ENCODE measurements at regions of chr2 and their contacts with region 1.

Region 1: GRCh38 chr2:8234757-8235374 is 447.0 kb upstream of the ID2 start:
- DNase-seq: peak; percentile 34 to 43
- ATAC-seq: peak; percentile 84 to 92
- H3K4me3 ChIP-seq: no peak overlapping the region
- H3K27ac ChIP-seq: peak overlapping the region in 3 of 4 donors; percentile 9 to 76 (median 69)
- H3K4me1 ChIP-seq: peaks cover 0 to 22% of the 10 kb centered on the region in 2 donors
- H3K27me3 ChIP-seq: no peaks in the 10 kb centered on the region
- CTCF ChIP-seq: no peak
- POLR2A ChIP-seq: no peak

Region 2: GRCh38 chr2:8103083-8103708 is 131.7 kb before region 1 on chr2:
- in situ Hi-C with region 1: no loop called
- intact Hi-C with region 1: no loop called
- DNase-seq: no peak
- ATAC-seq: no peak
- H3K4me3 ChIP-seq: no peak overlapping the region
- H3K27ac ChIP-seq: no peak overlapping the region
- H3K4me1 ChIP-seq: no peaks in the 10 kb centered on the region
- H3K27me3 ChIP-seq: peaks cover 0 to 2% (median 0%) of the 10 kb centered on the region in 3 donors
- CTCF ChIP-seq: no peak
- POLR2A ChIP-seq: no peak

Region 3: GRCh38 chr2:8259106-8259840 is 24.4 kb after region 1 on chr2:
- in situ Hi-C with region 1: no loop called
- intact Hi-C with region 1: no loop called
- DNase-seq: peak in 1 of 2 donors; percentile 24
- ATAC-seq: no peak
- H3K4me3 ChIP-seq: no peak overlapping the region
- H3K27ac ChIP-seq: no peak overlapping the region
- H3K4me1 ChIP-seq: no peaks in the 10 kb centered on the region
- H3K27me3 ChIP-seq: no peaks in the 10 kb centered on the region
- CTCF ChIP-seq: no peak
- POLR2A ChIP-seq: no peak

Region 4: GRCh38 chr2:8412586-8412985 is 177.7 kb after region 1 on chr2:
- in situ Hi-C with region 1: no loop called
- intact Hi-C with region 1: loop called (anchors 10 kb)
- DNase-seq: peak; percentile 18 to 53
- ATAC-seq: peak in 1 of 2 donors; percentile 35
- H3K4me3 ChIP-seq: no peak overlapping the region
- H3K27ac ChIP-seq: peak overlapping the region in 2 of 4 donors; percentile 11 to 41
- H3K4me1 ChIP-seq: peaks cover 17% of the 10 kb centered on the region in 2 donors
- H3K27me3 ChIP-seq: no peaks in the 10 kb centered on the region
- CTCF ChIP-seq: no peak
- POLR2A ChIP-seq: no peak

Region 5: GRCh38 chr2:9033385-9034168 is 798.7 kb after region 1 on chr2:
- in situ Hi-C with region 1: no loop called
- intact Hi-C with region 1: no loop called
- DNase-seq: no peak
- ATAC-seq: no peak
- H3K4me3 ChIP-seq: no peak overlapping the region
- H3K27ac ChIP-seq: no peak overlapping the region
- H3K4me1 ChIP-seq: no peaks in the 10 kb centered on the region
- H3K27me3 ChIP-seq: no peaks in the 10 kb centered on the region
- CTCF ChIP-seq: no peak
- POLR2A ChIP-seq: no peak

Measured in gastrocnemius medialis (tissue), 4 donors.